HepG2 (cell line): ENCODE measurements at regions of chr4 and their contacts with region 1.

Region 1: DNA sequence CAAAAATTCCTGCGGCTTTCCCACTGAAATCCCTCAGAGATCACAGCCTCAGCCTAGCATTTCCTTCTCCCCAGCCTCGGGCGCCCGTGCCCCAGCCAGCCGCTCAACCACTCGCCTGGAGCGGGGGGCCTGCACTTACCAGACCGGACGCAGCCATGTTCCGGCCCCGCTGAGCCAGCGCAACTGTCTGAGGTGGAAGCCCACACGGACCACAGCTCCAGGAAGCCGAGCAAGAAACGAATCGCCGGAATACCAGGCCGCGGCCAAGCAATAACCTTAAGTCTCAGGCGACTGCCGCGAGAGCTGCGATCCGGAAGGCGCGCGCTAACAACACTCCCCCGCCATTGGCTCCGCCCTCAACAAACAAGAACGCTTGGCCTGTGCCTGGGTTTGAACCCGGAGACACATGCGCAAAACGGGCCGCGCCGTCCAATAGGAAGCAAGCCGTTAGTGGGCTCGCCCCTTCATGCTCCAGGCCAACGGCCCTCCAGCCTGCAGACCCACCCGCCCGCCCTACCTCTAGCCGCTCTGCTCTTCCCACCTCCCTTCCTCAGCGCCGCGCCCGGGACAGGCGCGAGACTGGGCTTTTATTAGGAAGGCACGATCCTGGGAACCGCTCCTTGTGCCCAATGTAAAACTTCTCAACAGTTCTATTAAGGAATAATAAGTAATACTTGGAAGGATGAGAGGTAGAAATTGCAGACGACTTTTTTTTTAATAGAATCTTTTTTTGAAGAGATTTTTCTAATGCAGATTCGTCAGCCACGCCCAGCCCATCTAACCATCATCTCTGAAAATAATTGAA is at the start of gene CENPC:
- DNase-seq: peak; percentile 96
- ATAC-seq: peak; percentile 99
- H3K4me3 ChIP-seq: peak within 1 kb of the TSS; percentile 94 to 100 (median 96)
- H3K27ac ChIP-seq: peak within 1 kb of the TSS; percentile 96
- H3K4me1 ChIP-seq: peaks cover 36% of the 10 kb centered on the region
- H3K27me3 ChIP-seq: no peaks in the 10 kb centered on the region
- CTCF ChIP-seq: no peak
- EP300 ChIP-seq: no peak; a peak in 1 of 4 replicates
- POLR2A ChIP-seq: peak; percentile 86 to 95
- RAD21 ChIP-seq: no peak
- total RNA-seq, gene CENPC: 15.7 and 16.4 TPM in 2 replicates

Region 2: GRCh38 chr4:67522851-67523671 is 22.3 kb before region 1 on chr4:
- CTCF ChIA-PET with region 1: no interaction called
- POLR2A ChIA-PET with region 1: no interaction called
- in situ Hi-C with region 1: no loop called
- intact Hi-C with region 1: loop called (anchors 2 kb)
- DNase-seq: no peak
- ATAC-seq: no peak
- H3K4me3 ChIP-seq: no peak overlapping the region
- H3K27ac ChIP-seq: no peak overlapping the region
- H3K4me1 ChIP-seq: no peaks in the 10 kb centered on the region
- H3K27me3 ChIP-seq: no peaks in the 10 kb centered on the region
- CTCF ChIP-seq: no peak
- EP300 ChIP-seq: no peak
- POLR2A ChIP-seq: no peak
- RAD21 ChIP-seq: no peak

Region 3: DNA sequence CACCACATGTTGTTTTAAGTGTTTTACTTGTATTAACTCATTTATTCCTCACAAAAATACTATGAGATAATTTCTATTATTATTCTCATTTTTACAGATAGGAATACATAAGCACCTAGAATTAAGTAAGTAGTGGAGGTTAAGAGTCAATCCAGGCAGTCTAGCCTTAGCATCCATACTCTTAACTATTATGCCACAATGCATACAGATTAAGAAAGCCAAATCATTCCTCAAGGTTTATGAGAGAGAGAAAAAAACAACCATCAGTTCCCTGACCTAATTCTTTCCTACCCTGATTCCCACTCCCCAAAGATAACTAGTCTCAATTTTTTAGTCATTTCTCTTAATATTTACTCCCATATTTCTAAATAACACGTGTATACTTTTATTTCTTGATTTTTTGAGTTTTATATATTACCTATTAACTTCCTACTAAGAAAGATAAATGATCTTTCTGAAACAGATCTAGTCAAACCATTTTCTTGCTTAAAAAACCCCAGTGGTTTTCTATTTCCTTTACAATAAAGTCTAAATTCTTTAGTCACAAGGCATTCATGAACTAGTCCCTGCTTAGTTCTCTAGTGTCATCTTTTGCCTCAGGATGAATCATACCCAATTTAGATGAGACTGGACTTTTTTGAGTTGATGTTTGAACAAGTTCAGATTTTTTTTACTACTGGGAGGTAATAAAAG is 139.6 kb after region 1 on chr4:
- CTCF ChIA-PET with region 1: no interaction called
- POLR2A ChIA-PET with region 1: no interaction called
- in situ Hi-C with region 1: no loop called
- intact Hi-C with region 1: loop called (anchors 5 kb)
- DNase-seq: no peak
- ATAC-seq: no peak
- H3K4me3 ChIP-seq: no peak overlapping the region
- H3K27ac ChIP-seq: no peak overlapping the region
- H3K4me1 ChIP-seq: peaks cover 10% of the 10 kb centered on the region
- H3K27me3 ChIP-seq: no peaks in the 10 kb centered on the region
- CTCF ChIP-seq: no peak
- EP300 ChIP-seq: no peak
- POLR2A ChIP-seq: no peak
- RAD21 ChIP-seq: no peak

Region 4: DNA sequence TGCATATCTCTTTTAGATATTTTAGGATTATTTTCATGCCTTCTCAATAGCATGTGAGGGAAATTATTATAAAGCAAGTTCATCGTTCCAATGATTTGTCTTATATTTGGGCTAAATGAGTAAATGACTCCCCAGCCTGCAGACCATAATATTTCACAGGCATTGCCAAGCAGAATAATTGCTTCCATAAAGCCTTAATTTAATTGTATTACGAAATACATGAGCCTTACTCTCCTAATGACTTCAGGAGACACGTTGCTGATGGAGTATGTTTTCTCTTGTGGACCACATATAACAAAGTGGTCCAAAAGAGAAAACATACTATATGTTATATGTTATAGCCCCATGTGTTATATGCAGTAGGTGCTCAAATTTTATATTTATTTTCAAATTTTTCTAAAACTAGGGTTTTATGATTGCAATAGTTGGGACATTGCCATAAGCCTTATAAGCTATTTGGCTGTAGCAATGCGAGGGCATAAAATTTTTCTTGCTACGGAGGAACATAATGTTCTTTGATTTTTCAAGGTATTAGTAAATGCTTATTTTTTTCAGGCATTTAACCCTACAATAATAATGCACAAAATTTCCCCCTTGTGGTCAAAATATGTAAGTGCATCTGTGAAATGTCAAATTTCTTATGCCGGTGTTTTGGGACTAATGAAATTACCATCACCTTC is 364.6 kb after region 1 on chr4:
- CTCF ChIA-PET with region 1: no interaction called
- POLR2A ChIA-PET with region 1: no interaction called
- in situ Hi-C with region 1: loop called (anchors 25 kb)
- intact Hi-C with region 1: loop called (anchors 1 kb)
- DNase-seq: peak; percentile 4
- ATAC-seq: no peak
- H3K4me3 ChIP-seq: no peak overlapping the region
- H3K27ac ChIP-seq: no peak overlapping the region
- H3K4me1 ChIP-seq: peaks cover 8% of the 10 kb centered on the region; the same call in 1 of the 2 replicates
- H3K27me3 ChIP-seq: no peaks in the 10 kb centered on the region
- CTCF ChIP-seq: peak; percentile 31; the same call in 1 of the 2 replicates
- EP300 ChIP-seq: no peak
- POLR2A ChIP-seq: no peak
- RAD21 ChIP-seq: no peak

Region 5: DNA sequence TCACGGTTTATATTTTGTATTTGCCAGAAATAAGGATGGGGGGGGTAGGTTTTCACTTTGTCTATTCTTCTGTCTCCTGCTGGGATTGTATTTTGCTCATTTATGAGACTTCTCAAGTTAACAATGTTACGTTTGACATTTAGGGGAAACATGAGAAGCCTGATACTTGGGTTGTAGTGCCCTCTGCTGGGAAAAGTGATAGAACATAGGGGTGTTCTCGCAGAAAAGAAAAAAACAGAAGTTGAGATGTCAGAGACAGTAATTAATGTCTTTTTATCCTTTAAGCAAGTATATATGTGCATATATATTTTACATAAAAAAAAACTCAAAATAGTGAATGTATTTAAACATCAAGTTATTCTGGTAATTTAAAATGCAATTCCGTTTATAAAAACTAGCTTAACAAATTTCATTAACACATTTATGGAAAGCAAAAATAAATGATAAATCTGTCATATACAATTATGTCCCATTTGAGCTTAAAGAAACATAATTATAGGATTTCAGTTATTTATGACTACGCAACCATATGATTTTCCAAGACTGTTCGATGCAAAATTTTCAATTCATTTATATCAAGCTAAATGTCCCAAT is 630.3 kb after region 1 on chr4:
- CTCF ChIA-PET with region 1: no interaction called
- POLR2A ChIA-PET with region 1: no interaction called
- in situ Hi-C with region 1: loop called (anchors 25 kb)
- intact Hi-C with region 1: loop called (anchors 5 kb)
- DNase-seq: peak; percentile 44
- ATAC-seq: peak; percentile 68
- H3K4me3 ChIP-seq: no peak overlapping the region
- H3K27ac ChIP-seq: no peak overlapping the region
- H3K4me1 ChIP-seq: no peaks in the 10 kb centered on the region
- H3K27me3 ChIP-seq: no peaks in the 10 kb centered on the region
- CTCF ChIP-seq: peak; percentile 66
- EP300 ChIP-seq: no peak
- POLR2A ChIP-seq: no peak
- RAD21 ChIP-seq: peak; percentile 47; the same call in 1 of the 2 replicates